HepG2 (cell line): ENCODE measurements at regions of chr13 and their contacts with region 1.

Region 1: GRCh38 chr13:95296326-95296925 is 4.8 kb downstream of the ABCC4 start:
- DNase-seq: peak; percentile 56
- ATAC-seq: peak; percentile 60
- H3K4me3 ChIP-seq: no peak overlapping the region
- H3K27ac ChIP-seq: no peak overlapping the region
- H3K4me1 ChIP-seq: peaks cover 38% of the 10 kb centered on the region
- H3K27me3 ChIP-seq: peaks cover 0 to 3% of the 10 kb centered on the region in 2 experiments; a peak in 1 of 5 replicates
- CTCF ChIP-seq: peak; percentile 84
- EP300 ChIP-seq: no peak
- POLR2A ChIP-seq: no peak
- RAD21 ChIP-seq: peak; percentile 72; the same call in 1 of the 2 replicates

Region 2: DNA sequence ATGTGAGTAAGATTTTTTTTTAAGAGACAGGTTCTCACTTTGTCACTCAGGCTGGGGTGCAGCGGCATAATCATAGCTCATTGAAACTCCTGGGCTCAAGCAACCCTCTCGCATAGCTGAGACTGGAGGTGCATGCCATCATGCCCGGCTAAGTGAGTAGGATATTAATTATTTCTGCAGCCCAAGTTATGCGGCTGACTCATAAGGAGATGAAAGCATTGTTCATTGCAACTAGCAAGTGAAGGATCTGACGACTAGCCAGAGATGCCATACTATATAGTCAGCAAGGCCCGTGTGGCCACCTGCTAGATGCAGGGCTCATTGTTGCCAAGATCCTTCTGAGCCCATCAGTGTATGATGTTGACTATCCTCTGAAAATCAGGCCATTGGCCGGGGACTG is 40.3 kb before region 1 on chr13:
- CTCF ChIA-PET with region 1: no interaction called
- POLR2A ChIA-PET with region 1: no interaction called
- in situ Hi-C with region 1: no loop called
- intact Hi-C with region 1: loop called (anchors 5 kb)
- DNase-seq: peak; percentile 23
- ATAC-seq: no peak
- H3K4me3 ChIP-seq: no peak overlapping the region
- H3K27ac ChIP-seq: no peak overlapping the region
- H3K4me1 ChIP-seq: peaks cover 76% of the 10 kb centered on the region
- H3K27me3 ChIP-seq: no peaks in the 10 kb centered on the region
- CTCF ChIP-seq: no peak
- EP300 ChIP-seq: no peak
- POLR2A ChIP-seq: no peak
- RAD21 ChIP-seq: no peak

Region 3: GRCh38 chr13:95315752-95316151 is 19.3 kb after region 1 on chr13:
- CTCF ChIA-PET with region 1: interaction called, 4 read pairs
- POLR2A ChIA-PET with region 1: interaction called, 4 read pairs
- in situ Hi-C with region 1: no loop called
- intact Hi-C with region 1: loop called (anchors 2 kb)
- DNase-seq: no peak
- ATAC-seq: no peak
- H3K4me3 ChIP-seq: no peak overlapping the region
- H3K27ac ChIP-seq: no peak overlapping the region
- H3K4me1 ChIP-seq: peaks cover 20% of the 10 kb centered on the region
- H3K27me3 ChIP-seq: no peaks in the 10 kb centered on the region
- CTCF ChIP-seq: no peak
- EP300 ChIP-seq: no peak
- POLR2A ChIP-seq: no peak
- RAD21 ChIP-seq: no peak

Region 4: DNA sequence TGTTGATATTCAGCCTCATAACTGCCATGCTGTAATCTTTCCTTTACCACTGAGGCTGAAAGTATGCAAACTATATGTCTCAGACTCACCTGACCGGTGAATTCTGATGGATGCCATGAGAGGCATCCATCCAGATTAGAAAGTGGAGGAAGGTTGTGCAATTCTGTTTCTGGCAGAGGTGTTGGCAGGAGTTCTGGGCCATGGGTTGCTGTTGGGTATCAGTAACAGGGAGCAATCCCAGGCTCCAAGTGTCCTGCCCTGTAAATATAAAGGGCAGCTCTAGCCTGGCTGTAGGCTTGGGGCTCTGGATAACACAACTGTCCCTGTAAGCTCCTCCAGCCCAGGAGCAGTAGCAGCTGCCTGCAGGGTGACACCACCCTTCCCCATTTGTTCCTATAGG is 82.2 kb after region 1 on chr13:
- CTCF ChIA-PET with region 1: interaction called, 26 read pairs
- POLR2A ChIA-PET with region 1: interaction called, 11 read pairs
- in situ Hi-C with region 1: loop called (anchors 10 kb)
- intact Hi-C with region 1: loop called (anchors 1 kb)
- DNase-seq: no peak
- ATAC-seq: no peak
- H3K4me3 ChIP-seq: no peak overlapping the region
- H3K27ac ChIP-seq: no peak overlapping the region
- H3K4me1 ChIP-seq: peaks cover 10% of the 10 kb centered on the region; the same call in 1 of the 2 replicates
- H3K27me3 ChIP-seq: no peaks in the 10 kb centered on the region
- CTCF ChIP-seq: no peak
- EP300 ChIP-seq: no peak
- POLR2A ChIP-seq: no peak
- RAD21 ChIP-seq: no peak